ENCODE measurements at regions of chr5 and their contacts with region 1.

Region 1: DNA sequence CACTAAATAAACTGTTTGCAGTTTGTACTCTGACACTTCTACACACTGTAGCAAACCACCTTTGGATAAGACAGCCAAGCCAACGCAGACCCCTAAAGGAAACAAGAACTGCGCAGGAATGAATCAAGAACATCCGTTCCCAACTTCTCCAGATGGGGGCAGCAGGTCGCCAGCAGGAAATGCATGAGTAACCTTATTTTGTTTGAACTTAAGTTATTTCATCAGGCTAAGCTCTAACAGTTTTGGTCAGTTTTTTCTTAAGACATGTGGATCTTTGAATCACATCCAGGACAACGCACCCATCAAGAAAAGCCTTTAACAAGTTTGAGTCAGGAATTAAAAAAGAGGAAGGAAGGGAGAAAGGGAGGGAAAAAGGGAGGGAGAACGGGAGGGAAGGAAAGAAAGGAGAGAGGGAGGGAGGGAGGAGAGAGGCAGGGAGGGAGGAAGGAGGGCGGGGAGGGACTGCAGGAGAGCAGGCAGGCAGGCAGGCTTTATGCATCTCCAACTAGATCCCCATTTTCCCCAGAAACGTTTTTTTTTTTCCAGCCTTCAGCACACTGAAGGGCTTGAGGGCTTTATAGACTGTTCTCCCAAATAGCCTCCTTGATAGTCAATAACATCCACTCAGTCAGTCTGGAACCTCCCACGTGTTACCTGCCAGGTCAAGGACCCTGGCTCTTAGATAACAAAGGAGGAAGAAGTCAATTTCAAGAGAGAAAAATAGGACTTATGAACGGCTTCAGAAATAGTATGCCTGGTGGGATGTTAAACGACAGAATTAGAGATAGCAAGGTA is 22.2 kb downstream of the BHMT start:
- DNase-seq: peak in 4 of 5 donors; percentile 42 to 51 (median 50)
- ATAC-seq: peak; percentile 55 to 88 (median 68)
- H3K4me3 ChIP-seq: peak overlapping the region in 10 of 12 donors; percentile 5 to 46 (median 30)
- H3K27ac ChIP-seq: peak overlapping the region in 7 of 12 donors; percentile 13 to 76 (median 32)
- H3K4me1 ChIP-seq: peaks cover 0 to 12% (median 7%) of the 10 kb centered on the region in 12 donors
- H3K27me3 ChIP-seq: no peaks in the 10 kb centered on the region
- CTCF ChIP-seq: peak; percentile 40 to 79 (median 66)
- POLR2A ChIP-seq: no peak

Region 2: GRCh38 chr5:78899922-78900362 is 233.9 kb before region 1 on chr5:
- intact Hi-C with region 1: loop called in 2 of 10 experiments (anchors 5 kb)
- DNase-seq: no peak
- ATAC-seq: peak in 1 of 4 donors; percentile 36
- H3K4me3 ChIP-seq: no peak overlapping the region
- H3K27ac ChIP-seq: no peak overlapping the region
- H3K4me1 ChIP-seq: peaks cover 0 to 11% (median under 1%) of the 10 kb centered on the region in 12 donors
- H3K27me3 ChIP-seq: no peaks in the 10 kb centered on the region
- CTCF ChIP-seq: peak; percentile 40 to 74 (median 58)
- POLR2A ChIP-seq: no peak

Region 3: GRCh38 chr5:79020861-79021561 is 112.8 kb before region 1 on chr5:
- intact Hi-C with region 1: loop called (anchors 1 to 2 kb)
- DNase-seq: peak in 4 of 5 donors; percentile 28 to 47 (median 44)
- ATAC-seq: peak; percentile 64 to 91 (median 84)
- H3K4me3 ChIP-seq: peak overlapping the region in 5 of 12 donors; percentile 8 to 39 (median 23)
- H3K27ac ChIP-seq: no peak overlapping the region
- H3K4me1 ChIP-seq: peaks cover 0 to 11% (median 4%) of the 10 kb centered on the region in 12 donors
- H3K27me3 ChIP-seq: no peaks in the 10 kb centered on the region
- CTCF ChIP-seq: peak; percentile 64 to 89 (median 78)
- POLR2A ChIP-seq: no peak

Region 4: DNA sequence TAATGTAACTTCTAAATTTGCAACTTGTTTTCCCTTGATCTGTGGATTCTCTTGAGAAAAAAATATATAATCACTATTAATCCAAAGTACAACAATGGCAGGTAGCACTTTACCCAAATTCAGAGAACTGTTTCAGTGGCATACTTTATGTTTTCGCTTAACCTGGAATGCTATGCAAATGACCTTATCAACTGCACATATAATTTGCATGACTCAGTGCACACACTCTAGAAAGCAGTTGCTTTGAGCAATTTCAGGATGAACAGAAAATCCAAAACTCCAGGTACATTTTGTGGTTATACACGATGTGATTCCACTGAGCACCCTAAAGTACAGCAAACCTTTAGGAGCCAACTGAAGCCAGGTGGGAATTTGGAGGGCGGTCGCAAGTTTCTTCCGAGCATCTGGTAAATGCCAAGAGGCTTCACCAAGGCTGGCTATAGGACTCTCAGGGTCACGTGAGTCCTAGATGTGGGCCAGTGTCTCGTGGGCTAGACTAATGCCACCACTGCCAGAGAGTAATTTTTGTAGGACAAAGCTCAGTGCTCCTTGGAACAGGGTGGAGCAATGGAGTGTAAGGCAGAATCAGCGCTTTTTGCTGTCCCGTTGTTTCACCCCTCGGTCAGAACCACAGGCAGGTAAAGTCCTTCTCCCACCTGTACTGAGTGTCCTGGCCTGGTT is 101.7 kb before region 1 on chr5:
- intact Hi-C with region 1: no loop called
- DNase-seq: no peak
- ATAC-seq: no peak
- H3K4me3 ChIP-seq: no peak overlapping the region
- H3K27ac ChIP-seq: no peak overlapping the region
- H3K4me1 ChIP-seq: no peaks in the 10 kb centered on the region
- H3K27me3 ChIP-seq: no peaks in the 10 kb centered on the region
- CTCF ChIP-seq: no peak
- POLR2A ChIP-seq: no peak

Region 5: DNA sequence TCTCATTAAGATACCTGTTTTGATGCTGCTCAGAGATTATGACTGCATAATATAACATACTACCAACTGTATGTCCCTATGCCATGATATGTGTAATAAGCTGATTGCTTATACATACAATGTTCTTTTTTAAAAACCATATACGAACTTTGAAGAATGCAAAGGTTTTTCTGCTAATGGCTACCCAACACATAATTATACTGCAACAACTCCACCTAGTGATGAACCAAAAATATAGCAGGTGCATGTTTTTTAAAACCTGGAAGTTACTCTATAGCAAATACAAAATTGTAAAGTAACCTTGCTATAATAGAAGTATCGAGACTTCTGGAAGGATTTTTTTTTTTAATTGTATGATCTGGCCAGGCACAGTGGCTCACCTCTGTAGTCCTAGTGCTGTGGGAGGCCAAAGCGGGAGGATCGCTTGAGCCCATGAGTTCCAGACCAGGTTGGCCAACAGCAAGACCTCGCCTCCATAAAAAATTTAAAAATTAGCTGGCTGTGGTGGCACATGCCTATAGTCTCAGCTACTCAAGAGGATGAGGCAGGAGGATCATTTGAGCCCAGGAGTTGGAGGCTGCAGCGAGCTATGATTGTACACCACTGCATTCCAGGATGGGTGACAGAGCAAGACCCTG is 331.0 kb after region 1 on chr5:
- intact Hi-C with region 1: loop called (anchors 2 to 10 kb)
- DNase-seq: no peak
- ATAC-seq: peak in 2 of 4 donors; percentile 36 to 56
- H3K4me3 ChIP-seq: no peak overlapping the region
- H3K27ac ChIP-seq: no peak overlapping the region
- H3K4me1 ChIP-seq: peaks cover 0 to 22% (median 2%) of the 10 kb centered on the region in 12 donors
- H3K27me3 ChIP-seq: no peaks in the 10 kb centered on the region
- CTCF ChIP-seq: peak; percentile 26 to 69 (median 55)
- POLR2A ChIP-seq: no peak

Region 6: GRCh38 chr5:79529110-79529509 is 395.3 kb after region 1 on chr5:
- intact Hi-C with region 1: loop called in 3 of 10 experiments (anchors 2 to 10 kb)
- DNase-seq: no peak
- ATAC-seq: no peak
- H3K4me3 ChIP-seq: no peak overlapping the region
- H3K27ac ChIP-seq: no peak overlapping the region
- H3K4me1 ChIP-seq: no peaks in the 10 kb centered on the region
- H3K27me3 ChIP-seq: no peaks in the 10 kb centered on the region
- CTCF ChIP-seq: no peak
- POLR2A ChIP-seq: no peak

Region 7: GRCh38 chr5:79535477-79536192 is 401.8 kb after region 1 on chr5:
- intact Hi-C with region 1: loop called in 6 of 10 experiments (anchors 2 to 5 kb)
- DNase-seq: no peak
- ATAC-seq: peak in 2 of 4 donors; percentile 54 to 58
- H3K4me3 ChIP-seq: no peak overlapping the region
- H3K27ac ChIP-seq: no peak overlapping the region
- H3K4me1 ChIP-seq: no peaks in the 10 kb centered on the region
- H3K27me3 ChIP-seq: no peaks in the 10 kb centered on the region
- CTCF ChIP-seq: peak in 11 of 12 donors; percentile 6 to 55 (median 42)
- POLR2A ChIP-seq: no peak